ENCODE measurements at regions of chr4 and their contacts with region 1.

Region 1: GRCh38 chr4:128809477-128810330 is at the start of gene JADE1:
- DNase-seq: peak; percentile 96
- ATAC-seq: peak; percentile 62
- H3K4me3 Mint-ChIP-seq: peak within 1 kb of the TSS; percentile 99
- H3K27ac Mint-ChIP-seq: peak within 1 kb of the TSS; percentile 100
- H3K4me1 Mint-ChIP-seq: peaks cover 12% of the 10 kb centered on the region
- H3K27me3 Mint-ChIP-seq: no peaks in the 10 kb centered on the region
- CTCF ChIP-seq: peak; percentile 48
- total RNA-seq, gene JADE1: 30.5 to 31.6 TPM

Region 2: DNA sequence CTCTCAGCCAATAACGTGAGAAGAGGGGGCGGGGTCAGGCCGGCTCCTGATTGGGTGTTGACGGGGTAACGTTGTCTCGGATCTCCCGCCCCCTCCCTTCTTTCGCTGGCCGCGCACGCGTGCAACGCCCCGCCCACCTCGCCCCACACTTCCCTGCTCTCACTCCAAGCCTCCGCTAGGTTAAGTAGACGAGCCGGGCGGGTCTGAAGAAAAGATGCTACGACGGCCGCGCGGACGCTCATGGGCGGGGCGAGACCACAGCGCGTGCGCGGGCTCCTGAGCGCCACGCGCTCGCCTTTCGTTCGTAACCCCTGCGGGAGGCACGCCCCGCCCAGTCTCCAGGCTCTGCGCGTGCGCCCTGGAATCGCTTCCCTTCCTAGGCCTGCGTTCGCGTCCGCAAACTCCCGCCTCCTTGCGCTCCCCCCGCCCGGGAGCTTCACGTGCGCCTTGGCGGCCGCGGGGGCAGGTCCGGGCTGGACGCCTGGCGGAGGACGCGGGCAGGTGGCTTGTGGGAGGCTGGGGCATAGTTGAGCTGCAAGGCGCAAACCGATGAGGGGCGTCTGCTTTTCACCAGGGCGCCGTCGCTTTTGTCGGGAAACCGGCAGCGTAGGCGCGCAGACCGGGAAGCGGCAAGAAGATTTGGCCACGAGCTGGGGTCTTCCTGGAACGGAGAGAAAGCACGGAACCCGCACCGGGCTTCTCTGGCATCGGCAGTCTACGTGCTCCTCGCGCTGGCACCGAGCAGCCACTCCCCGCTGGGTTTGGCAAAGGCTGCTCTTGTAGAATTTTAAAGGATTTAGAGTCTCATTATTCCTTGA is 521.6 kb before region 1 on chr4:
- CTCF ChIA-PET with region 1: no interaction called
- POLR2A ChIA-PET with region 1: interaction called, 8 read pairs
- intact Hi-C with region 1: loop called (anchors 5 kb)
- DNase-seq: peak; percentile 100
- ATAC-seq: peak; percentile 91
- H3K4me3 Mint-ChIP-seq: peak overlapping the region; percentile 81
- H3K27ac Mint-ChIP-seq: peak overlapping the region; percentile 89
- H3K4me1 Mint-ChIP-seq: peaks cover 30% of the 10 kb centered on the region
- H3K27me3 Mint-ChIP-seq: no peaks in the 10 kb centered on the region
- CTCF ChIP-seq: no peak

Region 3: GRCh38 chr4:128427832-128428366 is 381.8 kb before region 1 on chr4:
- CTCF ChIA-PET with region 1: no interaction called
- POLR2A ChIA-PET with region 1: no interaction called
- intact Hi-C with region 1: no loop called
- DNase-seq: no peak
- ATAC-seq: no peak
- H3K4me3 Mint-ChIP-seq: no peak overlapping the region
- H3K27ac Mint-ChIP-seq: no peak overlapping the region
- H3K4me1 Mint-ChIP-seq: no peaks in the 10 kb centered on the region
- H3K27me3 Mint-ChIP-seq: no peaks in the 10 kb centered on the region
- CTCF ChIP-seq: no peak

Region 4: DNA sequence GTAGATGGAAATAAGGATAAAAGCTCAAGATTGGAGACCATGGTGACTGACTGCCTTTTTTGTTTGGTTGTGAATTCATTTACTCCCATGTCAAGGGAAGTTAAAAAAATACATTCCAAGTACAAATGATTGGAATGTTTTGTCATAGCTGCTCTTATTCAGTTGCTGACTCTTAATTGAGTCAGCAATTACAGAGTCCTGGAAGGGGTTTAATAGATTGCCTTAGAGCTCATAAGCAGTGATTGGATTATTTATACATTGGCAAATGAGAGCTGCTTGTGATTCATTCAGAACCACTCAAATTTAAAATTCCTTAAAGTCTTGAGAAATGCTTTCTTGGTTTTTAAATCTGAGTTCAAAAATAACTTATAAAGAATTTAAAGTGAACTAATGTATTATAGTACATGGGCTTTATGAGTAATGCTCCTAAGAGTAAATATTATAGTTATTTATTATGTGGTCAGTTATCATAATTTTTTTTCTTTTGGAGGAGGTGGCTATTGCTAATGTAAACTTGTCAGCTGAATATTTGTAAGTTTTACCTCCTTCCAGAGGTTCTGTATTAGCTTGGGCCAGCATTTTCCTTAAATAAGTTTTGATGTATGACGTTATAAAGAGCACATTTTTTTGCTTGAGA is 13.4 kb after region 1 on chr4:
- CTCF ChIA-PET with region 1: interaction called, 12 read pairs
- POLR2A ChIA-PET with region 1: interaction called, 15 read pairs
- intact Hi-C with region 1: no loop called
- DNase-seq: no peak
- ATAC-seq: no peak
- H3K4me3 Mint-ChIP-seq: no peak overlapping the region
- H3K27ac Mint-ChIP-seq: no peak overlapping the region
- H3K4me1 Mint-ChIP-seq: peaks cover 78% of the 10 kb centered on the region
- H3K27me3 Mint-ChIP-seq: no peaks in the 10 kb centered on the region
- CTCF ChIP-seq: no peak

Region 5: DNA sequence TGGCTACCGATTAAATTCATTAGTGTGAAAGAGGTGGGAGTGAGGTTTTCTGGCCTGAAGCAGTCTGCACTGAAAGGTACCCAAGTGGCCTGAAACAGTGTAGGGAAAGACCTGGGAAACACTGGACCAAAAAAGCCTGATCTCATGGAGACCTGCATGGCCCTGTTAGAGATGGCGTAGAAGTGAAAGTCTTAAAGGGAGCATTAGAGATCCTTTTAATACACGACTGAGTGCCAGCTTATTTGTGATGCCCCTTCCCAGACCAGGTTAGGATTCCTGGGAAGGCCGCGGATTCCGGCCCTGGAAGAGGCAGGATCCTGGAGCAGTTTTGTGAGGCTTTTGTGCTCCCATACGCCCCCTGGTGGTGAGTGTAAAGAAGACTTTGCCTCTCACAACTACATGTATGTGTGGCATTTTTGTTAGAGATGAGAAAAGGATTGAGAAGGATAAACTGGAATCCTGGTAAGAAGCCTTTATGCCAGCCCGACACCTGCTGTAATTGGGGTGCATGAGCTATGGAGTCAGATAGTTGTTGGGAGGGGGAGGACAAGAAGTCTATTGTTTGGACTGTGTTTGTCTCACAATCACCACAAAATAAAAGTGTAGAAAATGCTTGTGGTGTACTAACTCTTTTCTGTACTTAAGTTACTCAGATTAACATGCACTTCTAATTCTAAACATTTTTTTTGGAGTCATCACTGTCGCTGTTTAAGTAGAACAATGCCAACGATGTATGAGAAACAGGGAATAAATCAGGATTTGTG is 53.8 kb after region 1 on chr4:
- CTCF ChIA-PET with region 1: interaction called, 26 read pairs
- POLR2A ChIA-PET with region 1: interaction called, 3 read pairs
- intact Hi-C with region 1: loop called (anchors 5 kb)
- DNase-seq: peak; percentile 66
- ATAC-seq: no peak
- H3K4me3 Mint-ChIP-seq: no peak overlapping the region
- H3K27ac Mint-ChIP-seq: peak overlapping the region; percentile 80
- H3K4me1 Mint-ChIP-seq: peaks cover 47% of the 10 kb centered on the region
- H3K27me3 Mint-ChIP-seq: no peaks in the 10 kb centered on the region
- CTCF ChIP-seq: peak; percentile 94